Panc1 (cell line): ENCODE measurements at regions of chr4 and their contacts with region 1.

Region 1: GRCh38 chr4:39085891-39086290 is 23.9 kb downstream of the KLHL5 start:
- DNase-seq: no peak
- ATAC-seq: no peak
- H3K4me3 ChIP-seq: no peak overlapping the region
- H3K27ac ChIP-seq: no peak overlapping the region
- H3K4me1 ChIP-seq: no peaks in the 10 kb centered on the region
- H3K27me3 ChIP-seq: no peaks in the 10 kb centered on the region
- CTCF ChIP-seq: no peak

Region 2: DNA sequence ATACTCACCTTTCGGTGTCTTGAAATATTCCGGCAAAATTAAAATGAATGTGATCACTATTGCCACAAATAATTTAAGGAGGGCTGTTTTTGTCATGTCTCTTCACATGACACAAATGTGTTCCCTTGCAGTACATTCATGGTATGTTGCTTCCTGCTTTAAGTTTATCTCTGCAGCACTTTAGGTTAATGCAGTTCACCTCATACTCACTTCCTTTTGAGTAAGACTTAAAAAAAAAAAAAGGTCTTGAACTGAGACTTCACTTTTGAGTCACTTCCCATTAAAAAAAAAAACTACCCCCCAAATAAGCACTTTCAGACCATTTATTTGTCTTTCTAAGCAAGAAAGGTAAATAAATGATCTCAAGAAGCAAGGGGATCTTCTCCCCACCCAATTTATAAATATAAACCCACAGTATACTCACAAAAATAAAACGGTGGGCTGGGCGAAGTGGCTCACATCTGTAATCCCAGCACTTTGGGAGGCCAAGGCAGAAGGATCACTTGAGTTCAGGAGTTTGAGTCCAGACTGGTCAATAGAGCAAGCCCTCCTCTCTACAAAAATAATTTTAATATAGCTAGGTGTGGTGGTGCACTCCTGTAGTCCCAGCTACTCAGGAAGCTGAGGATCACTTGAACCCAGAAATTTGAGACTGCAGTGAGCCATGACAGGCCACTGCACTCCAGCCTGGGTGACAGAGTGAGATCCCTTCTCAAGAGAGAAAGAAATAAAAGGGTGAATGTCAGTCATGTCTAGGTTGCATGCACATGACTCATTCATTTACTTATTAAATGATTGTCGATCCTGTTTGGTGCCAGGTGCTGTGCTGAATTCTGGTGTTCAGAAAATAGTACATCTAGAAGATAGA is 53.4 kb before region 1 on chr4 and contains the start of gene TMEM156:
- CTCF ChIA-PET with region 1: no interaction called
- POLR2A ChIA-PET with region 1: interaction called, 10 read pairs
- in situ Hi-C with region 1: no loop called
- intact Hi-C with region 1: no loop called
- DNase-seq: no peak
- ATAC-seq: peak; percentile 36; the same call in 1 of the 2 replicates
- H3K4me3 ChIP-seq: peak within 1 kb of the TSS; percentile 47 to 57
- H3K27ac ChIP-seq: peak within 1 kb of the TSS; percentile 99
- H3K4me1 ChIP-seq: peaks cover 37% of the 10 kb centered on the region
- H3K27me3 ChIP-seq: no peaks in the 10 kb centered on the region
- CTCF ChIP-seq: no peak
- total RNA-seq, gene TMEM156: 5.8 TPM

Region 3: DNA sequence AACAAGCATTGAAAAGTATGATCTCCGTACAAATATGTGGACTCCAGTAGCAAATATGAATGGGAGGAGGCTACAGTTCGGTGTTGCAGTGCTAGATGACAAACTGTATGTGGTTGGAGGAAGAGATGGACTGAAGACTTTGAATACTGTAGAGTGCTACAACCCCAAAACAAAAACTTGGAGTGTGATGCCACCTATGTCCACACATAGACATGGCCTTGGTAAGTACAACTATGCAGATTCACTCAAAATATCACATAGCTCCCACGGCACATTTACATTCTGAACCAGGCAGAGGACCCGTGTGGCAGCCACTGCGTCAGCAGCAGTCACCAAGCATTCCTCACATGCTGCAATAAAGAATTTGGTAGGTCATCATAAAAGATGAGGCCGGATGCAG is 17.4 kb after region 1 on chr4:
- CTCF ChIA-PET with region 1: no interaction called
- POLR2A ChIA-PET with region 1: no interaction called
- in situ Hi-C with region 1: no loop called
- intact Hi-C with region 1: no loop called
- DNase-seq: no peak
- ATAC-seq: peak; percentile 63
- H3K4me3 ChIP-seq: no peak overlapping the region
- H3K27ac ChIP-seq: no peak overlapping the region
- H3K4me1 ChIP-seq: no peaks in the 10 kb centered on the region; the same call in 1 of the 2 replicates
- H3K27me3 ChIP-seq: no peaks in the 10 kb centered on the region
- CTCF ChIP-seq: no peak